ENCODE measurements at regions of chr10 and their contacts with region 1.

Region 1: GRCh38 chr10:15106352-15107013 is 9.3 kb downstream of the RPP38 start:
- DNase-seq: peak; percentile 83 to 88
- H3K4me3 ChIP-seq: no peak overlapping the region
- H3K4me3 Mint-ChIP-seq: no peak overlapping the region
- H3K27ac Mint-ChIP-seq: no peak overlapping the region
- H3K4me1 ChIP-seq: 0 out of 2 replicates have a peak, but pooled peaks cover 7% of the 10 kb centered on the region
- H3K4me1 Mint-ChIP-seq: no peaks in the 10 kb centered on the region
- H3K27me3 ChIP-seq: no peaks in the 10 kb centered on the region
- H3K27me3 Mint-ChIP-seq: no peaks in the 10 kb centered on the region
- CTCF ChIP-seq: peak; percentile 94 to 97

Region 2: GRCh38 chr10:14926722-14927416 is 179.6 kb before region 1 on chr10:
- CTCF ChIA-PET with region 1: no interaction called
- POLR2A ChIA-PET with region 1: no interaction called
- intact Hi-C with region 1: loop called (anchors 1 kb)
- DNase-seq: no peak
- H3K4me3 ChIP-seq: no peak overlapping the region
- H3K4me3 Mint-ChIP-seq: no peak overlapping the region
- H3K27ac Mint-ChIP-seq: peak overlapping the region; percentile 71
- H3K4me1 ChIP-seq: peaks cover 8% of the 10 kb centered on the region; the same call in 1 of the 2 replicates
- H3K4me1 Mint-ChIP-seq: peaks cover 14% of the 10 kb centered on the region
- H3K27me3 ChIP-seq: no peaks in the 10 kb centered on the region
- H3K27me3 Mint-ChIP-seq: no peaks in the 10 kb centered on the region
- CTCF ChIP-seq: no peak

Measured in Caco-2 (cell line).